ENCODE measurements at regions of chr2 and their contacts with region 1.

Region 1: GRCh38 chr2:3303583-3304406 is 73.8 kb downstream of the EIPR1 start:
- DNase-seq: peak; percentile 60 to 69 (median 68)
- H3K4me3 ChIP-seq: no peak overlapping the region
- H3K4me3 Mint-ChIP-seq: peak overlapping the region in 7 of 8 donors; percentile 3 to 63 (median 46)
- H3K27ac ChIP-seq: no peak overlapping the region
- H3K27ac Mint-ChIP-seq: peak overlapping the region; percentile 17 to 88 (median 75)
- H3K4me1 ChIP-seq: peaks cover 9% of the 10 kb centered on the region
- H3K4me1 Mint-ChIP-seq: peaks cover 10 to 23% (median 21%) of the 10 kb centered on the region in 4 donors
- H3K27me3 ChIP-seq: no peaks in the 10 kb centered on the region
- H3K27me3 Mint-ChIP-seq: no peaks in the 10 kb centered on the region

Region 2: GRCh38 chr2:2846332-2847208 is 457.2 kb before region 1 on chr2:
- CTCF ChIA-PET with region 1: no interaction called
- POLR2A ChIA-PET with region 1: no interaction called
- intact Hi-C with region 1: loop called (anchors 10 kb)
- DNase-seq: no peak
- H3K4me3 ChIP-seq: no peak overlapping the region
- H3K4me3 Mint-ChIP-seq: no peak overlapping the region
- H3K27ac ChIP-seq: no peak overlapping the region
- H3K27ac Mint-ChIP-seq: no peak overlapping the region
- H3K4me1 ChIP-seq: no peaks in the 10 kb centered on the region
- H3K4me1 Mint-ChIP-seq: no peaks in the 10 kb centered on the region
- H3K27me3 ChIP-seq: no peaks in the 10 kb centered on the region
- H3K27me3 Mint-ChIP-seq: no peaks in the 10 kb centered on the region

Region 3: GRCh38 chr2:3001615-3002560 is 301.9 kb before region 1 on chr2:
- CTCF ChIA-PET with region 1: no interaction called
- POLR2A ChIA-PET with region 1: no interaction called
- intact Hi-C with region 1: loop called (anchors 2 kb)
- DNase-seq: peak in 1 of 5 donors; percentile 1
- H3K4me3 ChIP-seq: no peak overlapping the region
- H3K4me3 Mint-ChIP-seq: peak overlapping the region in 1 of 8 donors; percentile 11
- H3K27ac ChIP-seq: no peak overlapping the region
- H3K27ac Mint-ChIP-seq: no peak overlapping the region
- H3K4me1 ChIP-seq: no peaks in the 10 kb centered on the region
- H3K4me1 Mint-ChIP-seq: peaks cover 0 to 4% (median under 1%) of the 10 kb centered on the region in 4 donors
- H3K27me3 ChIP-seq: no peaks in the 10 kb centered on the region
- H3K27me3 Mint-ChIP-seq: peaks cover 3 to 15% of the 10 kb centered on the region in 2 donors

Region 4: GRCh38 chr2:3293221-3293620 is 10.6 kb before region 1 on chr2:
- CTCF ChIA-PET with region 1: no interaction called
- POLR2A ChIA-PET with region 1: no interaction called
- intact Hi-C with region 1: no loop called
- DNase-seq: no peak
- H3K4me3 ChIP-seq: no peak overlapping the region
- H3K4me3 Mint-ChIP-seq: no peak overlapping the region
- H3K27ac ChIP-seq: no peak overlapping the region
- H3K27ac Mint-ChIP-seq: no peak overlapping the region
- H3K4me1 ChIP-seq: no peaks in the 10 kb centered on the region
- H3K4me1 Mint-ChIP-seq: peaks cover under 1 to 15% (median 3%) of the 10 kb centered on the region in 4 donors
- H3K27me3 ChIP-seq: no peaks in the 10 kb centered on the region
- H3K27me3 Mint-ChIP-seq: no peaks in the 10 kb centered on the region